ENCODE measurements at regions of chr1 and their contacts with region 1.

Region 1: DNA sequence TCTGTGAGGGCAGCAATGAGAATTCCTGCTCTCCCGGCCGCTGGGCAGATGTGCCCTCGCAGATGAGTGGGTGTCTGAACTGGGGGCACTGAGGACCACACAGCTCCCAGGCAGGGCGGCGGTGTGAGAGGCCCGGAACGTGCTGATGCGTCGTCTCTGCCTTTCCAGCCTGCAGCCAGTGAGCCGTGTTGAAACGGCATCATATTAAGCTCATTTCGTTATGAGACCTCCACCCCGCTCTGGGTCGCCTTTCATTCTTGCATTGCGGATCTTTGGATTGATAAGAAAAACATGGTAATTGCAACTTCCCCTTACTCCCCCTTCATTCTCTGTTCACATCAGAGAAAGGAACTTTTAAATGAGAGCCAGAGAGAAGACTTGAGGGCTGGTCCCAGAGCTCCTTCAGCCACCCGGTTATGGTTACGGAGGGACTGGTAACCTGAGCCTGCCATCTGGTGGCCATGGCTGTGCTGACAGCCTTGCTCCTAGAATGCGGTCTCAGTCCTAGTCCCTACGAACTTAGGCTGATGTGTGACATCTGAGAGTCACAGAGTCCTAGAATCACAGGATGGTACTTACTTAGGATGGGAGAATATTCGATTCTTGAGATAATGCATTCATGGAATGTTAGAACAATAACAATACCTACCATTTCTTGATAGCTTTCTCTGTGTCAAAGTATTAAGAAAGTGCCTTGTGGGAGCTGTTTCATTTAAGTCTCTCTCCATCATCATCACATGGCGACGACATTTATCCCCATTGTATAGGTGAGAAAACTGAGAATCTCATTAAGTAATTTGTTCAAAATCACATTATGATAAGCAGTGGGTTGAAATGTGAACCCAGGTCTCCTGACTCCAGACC is 271.0 kb downstream of the TRABD2B start:
- H3K4me3 ChIP-seq: peak overlapping the region; percentile 3; the same call in 1 of the 2 replicates
- H3K27ac ChIP-seq: no peak overlapping the region
- H3K4me1 ChIP-seq: 0 out of 2 replicates have a peak, but pooled peaks cover 5% of the 10 kb centered on the region
- CTCF ChIP-seq: peak; percentile 88

Region 2: GRCh38 chr1:47399138-47399845 is 326.9 kb before region 1 on chr1:
- CTCF ChIA-PET with region 1: interaction called, 13 read pairs
- POLR2A ChIA-PET with region 1: no interaction called
- H3K4me3 ChIP-seq: no peak overlapping the region
- H3K27ac ChIP-seq: no peak overlapping the region
- H3K4me1 ChIP-seq: no peaks in the 10 kb centered on the region
- CTCF ChIP-seq: no peak

Region 3: GRCh38 chr1:47437447-47438164 is 288.6 kb before region 1 on chr1 and contains the start of gene FOXD2:
- CTCF ChIA-PET with region 1: interaction called, 115 read pairs
- POLR2A ChIA-PET with region 1: interaction called, 18 read pairs
- H3K4me3 ChIP-seq: peak within 1 kb of the TSS; percentile 80
- H3K27ac ChIP-seq: peak within 1 kb of the TSS; percentile 98
- H3K4me1 ChIP-seq: no peaks in the 10 kb centered on the region
- CTCF ChIP-seq: peak; percentile 98

Region 4: GRCh38 chr1:47527658-47528255 is 198.5 kb before region 1 on chr1:
- CTCF ChIA-PET with region 1: interaction called, 17 read pairs
- POLR2A ChIA-PET with region 1: no interaction called
- H3K4me3 ChIP-seq: no peak overlapping the region
- H3K27ac ChIP-seq: no peak overlapping the region
- H3K4me1 ChIP-seq: no peaks in the 10 kb centered on the region
- CTCF ChIP-seq: peak; percentile 36; the same call in 1 of the 2 replicates

Region 5: DNA sequence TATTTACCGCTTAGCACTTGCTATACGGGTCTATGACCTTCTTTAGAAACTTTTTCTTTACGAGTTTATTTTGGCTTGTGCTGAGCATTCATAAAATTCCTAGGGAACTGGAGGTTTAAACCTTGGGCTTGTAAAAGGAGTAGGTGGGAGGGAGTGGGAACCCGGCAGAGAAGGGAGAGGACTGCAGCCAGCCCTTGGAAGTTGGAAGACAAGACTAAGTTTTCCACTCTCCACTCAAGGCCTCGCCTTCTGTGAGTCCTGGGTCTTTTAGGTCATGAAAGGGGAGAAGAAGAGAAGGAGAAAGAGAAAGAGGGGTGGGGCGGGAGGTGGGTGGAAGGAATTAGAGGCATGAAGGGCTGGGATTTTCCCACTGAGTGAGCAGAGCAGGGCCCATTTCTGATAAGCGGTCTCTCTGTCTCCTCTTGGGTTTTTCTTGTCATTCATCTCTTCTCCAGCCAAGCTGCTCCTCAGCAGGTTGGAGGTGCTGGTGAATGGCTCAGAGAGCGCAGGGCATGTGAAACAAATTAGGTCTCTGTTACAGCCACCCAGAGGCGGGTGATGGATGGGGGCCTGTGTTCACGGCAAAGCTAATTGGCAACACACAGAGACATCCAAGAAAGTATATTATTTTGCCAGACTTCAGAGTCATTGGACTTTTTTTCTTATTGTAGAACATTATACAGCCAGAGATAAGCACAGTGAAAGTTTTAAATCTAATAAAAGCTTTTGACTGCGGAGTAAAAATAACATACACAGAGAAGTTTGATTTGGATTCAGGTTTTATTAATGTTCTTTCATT is 41.1 kb before region 1 on chr1:
- CTCF ChIA-PET with region 1: no interaction called
- POLR2A ChIA-PET with region 1: interaction called, 10 read pairs
- H3K4me3 ChIP-seq: no peak overlapping the region
- H3K27ac ChIP-seq: peak overlapping the region; percentile 32
- H3K4me1 ChIP-seq: peaks cover 29% of the 10 kb centered on the region
- CTCF ChIP-seq: no peak

Region 6: DNA sequence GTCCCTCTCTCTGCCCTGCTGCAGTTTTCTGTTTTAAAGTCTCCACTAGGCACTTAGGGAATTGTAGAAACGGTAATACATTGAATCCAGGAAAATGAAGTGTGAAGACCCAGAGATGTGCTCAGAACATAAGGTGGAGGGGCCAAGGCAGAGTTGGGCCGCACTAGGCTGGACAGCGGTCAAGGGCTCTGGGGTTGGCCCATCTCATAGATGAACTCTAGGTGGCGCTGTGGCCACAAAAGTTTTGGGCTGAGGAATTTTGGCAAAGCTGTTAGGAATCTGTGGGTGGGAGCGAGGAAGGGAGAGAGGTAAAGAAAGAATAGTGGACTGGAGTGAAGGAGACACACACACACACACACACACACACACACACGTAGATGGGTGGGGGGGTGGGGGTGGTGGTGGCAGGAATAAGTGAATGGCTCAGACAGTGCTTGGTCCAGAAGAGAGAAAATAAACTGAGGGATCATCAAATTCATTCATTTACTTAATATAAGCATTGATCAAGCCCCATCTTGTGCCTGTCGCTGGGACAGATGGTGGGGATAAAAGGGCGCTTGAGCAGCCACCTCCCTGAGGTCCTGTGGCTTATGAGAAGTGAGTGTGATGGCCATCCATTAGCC is 12.4 kb after region 1 on chr1:
- CTCF ChIA-PET with region 1: interaction called, 30 read pairs
- POLR2A ChIA-PET with region 1: no interaction called
- H3K4me3 ChIP-seq: no peak overlapping the region
- H3K27ac ChIP-seq: no peak overlapping the region
- H3K4me1 ChIP-seq: no peaks in the 10 kb centered on the region
- CTCF ChIP-seq: no peak